Endothelial cell of umbilical vein (primary cell): ENCODE measurements at regions of chr16 and their contacts with region 1.

Region 1: GRCh38 chr16:57300387-57301125 is 16.1 kb upstream of the PLLP start:
- DNase-seq: peak; percentile 100
- H3K4me3 ChIP-seq: peak overlapping the region in 2 of 3 experiments; percentile 31 to 47
- H3K27ac ChIP-seq: peak overlapping the region; percentile 35
- H3K4me1 ChIP-seq: peaks cover 17% of the 10 kb centered on the region
- H3K27me3 ChIP-seq: no peaks in the 10 kb centered on the region
- CTCF ChIP-seq: peak; percentile 97 to 99
- POLR2A ChIP-seq: peak; percentile 32

Region 2: GRCh38 chr16:57091975-57092785 is 208.4 kb before region 1 on chr16 and contains the start of gene CPNE2:
- CTCF ChIA-PET with region 1: interaction called, 19 read pairs
- POLR2A ChIA-PET with region 1: no interaction called
- dilution Hi-C with region 1: no loop called
- intact Hi-C with region 1: no loop called
- DNase-seq: peak; percentile 65
- H3K4me3 ChIP-seq: peak within 1 kb of the TSS; percentile 64 to 86 (median 74)
- H3K27ac ChIP-seq: peak within 1 kb of the TSS; percentile 58
- H3K4me1 ChIP-seq: peaks cover 21% of the 10 kb centered on the region
- H3K27me3 ChIP-seq: no peaks in the 10 kb centered on the region
- CTCF ChIP-seq: no peak
- POLR2A ChIP-seq: peak; percentile 45
- total RNA-seq, gene CPNE2: 91.9 and 92.0 TPM in 2 replicates

Region 3: DNA sequence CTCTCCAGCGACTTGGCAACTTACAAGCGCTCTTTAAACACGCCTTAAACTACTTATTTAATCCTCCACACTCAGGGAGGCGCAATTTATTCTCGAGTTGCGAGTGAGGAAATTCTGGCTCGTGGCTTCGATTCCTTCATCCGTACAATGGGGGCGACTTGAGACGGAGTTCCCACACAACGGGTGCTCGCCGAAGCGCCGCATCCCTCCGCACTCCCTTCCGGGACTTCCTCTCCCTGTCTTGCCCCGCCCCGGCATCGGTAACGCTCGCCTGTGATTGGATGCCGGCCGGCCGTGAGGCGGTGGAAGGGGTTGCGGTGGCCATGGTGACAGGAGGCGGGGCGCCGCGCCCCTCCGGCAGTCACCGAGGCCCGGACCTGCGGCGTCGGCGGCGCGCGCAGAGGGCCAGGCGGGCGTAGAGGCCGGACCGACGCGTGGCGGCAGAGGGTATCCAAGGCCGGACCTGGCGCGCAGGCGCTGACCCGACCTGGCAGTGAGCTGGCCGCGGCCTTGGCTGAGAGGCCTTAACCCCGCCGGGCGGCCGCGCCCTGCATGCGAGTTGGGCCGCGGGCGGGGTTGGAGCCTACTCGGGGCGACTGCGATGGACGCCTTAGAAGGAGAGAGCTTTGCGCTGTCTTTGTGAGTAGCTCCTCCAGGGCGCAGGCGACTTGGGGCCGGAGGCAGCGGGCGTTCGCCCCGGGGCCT is 55.6 kb before region 1 on chr16 and contains the start of gene ARL2BP:
- CTCF ChIA-PET with region 1: interaction called, 19 read pairs
- POLR2A ChIA-PET with region 1: interaction called, 4 read pairs
- dilution Hi-C with region 1: no loop called
- intact Hi-C with region 1: loop called (anchors 1 kb)
- DNase-seq: peak; percentile 99
- H3K4me3 ChIP-seq: peak within 1 kb of the TSS; percentile 75 to 89 (median 85)
- H3K27ac ChIP-seq: peak within 1 kb of the TSS; percentile 72
- H3K4me1 ChIP-seq: peaks cover 11% of the 10 kb centered on the region
- H3K27me3 ChIP-seq: no peaks in the 10 kb centered on the region
- CTCF ChIP-seq: peak; percentile 3 to 10
- POLR2A ChIP-seq: peak; percentile 89
- total RNA-seq, gene ARL2BP: 76.7 and 80.4 TPM in 2 replicates

Region 4: DNA sequence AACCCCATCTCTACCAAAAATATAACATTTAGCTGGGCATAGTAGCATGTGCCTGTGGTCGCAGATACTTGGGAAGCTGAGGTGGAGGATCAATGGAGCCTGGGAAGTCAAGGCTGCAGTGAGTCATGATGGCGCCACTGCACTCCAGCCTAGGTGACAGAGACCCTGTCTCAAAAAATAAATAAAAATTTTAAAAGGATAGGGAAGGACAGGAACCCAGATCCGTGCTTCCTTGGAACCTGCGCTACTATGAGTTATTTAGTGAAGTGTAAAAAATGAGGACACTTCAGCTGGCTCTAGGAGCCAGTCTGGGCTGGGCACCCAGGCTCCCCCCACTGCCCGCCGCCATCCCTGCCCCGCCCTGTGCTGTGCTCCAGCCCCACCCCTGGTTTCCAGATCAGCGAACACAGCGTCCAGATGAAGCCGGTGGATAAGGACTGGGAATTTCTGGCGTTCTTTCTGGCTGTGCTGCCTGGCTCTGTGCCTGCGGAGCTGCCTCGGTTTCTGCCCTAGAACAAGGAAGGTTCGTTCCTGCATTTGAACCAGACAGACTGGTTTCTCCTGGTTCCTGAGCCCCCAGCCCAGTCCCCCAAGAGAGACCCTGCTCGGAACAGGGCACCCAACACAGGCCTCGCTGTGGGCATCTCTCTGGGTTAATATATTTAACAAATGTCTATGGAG is 34.6 kb before region 1 on chr16:
- CTCF ChIA-PET with region 1: interaction called, 8 read pairs
- POLR2A ChIA-PET with region 1: no interaction called
- dilution Hi-C with region 1: no loop called
- intact Hi-C with region 1: loop called (anchors 1 kb)
- DNase-seq: peak; percentile 83
- H3K4me3 ChIP-seq: peak overlapping the region in 1 of 3 experiments; percentile 41
- H3K27ac ChIP-seq: peak overlapping the region; percentile 77
- H3K4me1 ChIP-seq: peaks cover 21% of the 10 kb centered on the region
- H3K27me3 ChIP-seq: no peaks in the 10 kb centered on the region
- CTCF ChIP-seq: no peak
- POLR2A ChIP-seq: peak; percentile 49

Region 5: GRCh38 chr16:57349212-57350031 is 48.9 kb after region 1 on chr16:
- CTCF ChIA-PET with region 1: no interaction called
- POLR2A ChIA-PET with region 1: no interaction called
- dilution Hi-C with region 1: no loop called
- intact Hi-C with region 1: no loop called
- DNase-seq: no peak
- H3K4me3 ChIP-seq: no peak overlapping the region
- H3K27ac ChIP-seq: no peak overlapping the region
- H3K4me1 ChIP-seq: no peaks in the 10 kb centered on the region
- H3K27me3 ChIP-seq: peaks cover 10 to 20% of the 10 kb centered on the region in 2 experiments
- CTCF ChIP-seq: no peak
- POLR2A ChIP-seq: no peak

Region 6: DNA sequence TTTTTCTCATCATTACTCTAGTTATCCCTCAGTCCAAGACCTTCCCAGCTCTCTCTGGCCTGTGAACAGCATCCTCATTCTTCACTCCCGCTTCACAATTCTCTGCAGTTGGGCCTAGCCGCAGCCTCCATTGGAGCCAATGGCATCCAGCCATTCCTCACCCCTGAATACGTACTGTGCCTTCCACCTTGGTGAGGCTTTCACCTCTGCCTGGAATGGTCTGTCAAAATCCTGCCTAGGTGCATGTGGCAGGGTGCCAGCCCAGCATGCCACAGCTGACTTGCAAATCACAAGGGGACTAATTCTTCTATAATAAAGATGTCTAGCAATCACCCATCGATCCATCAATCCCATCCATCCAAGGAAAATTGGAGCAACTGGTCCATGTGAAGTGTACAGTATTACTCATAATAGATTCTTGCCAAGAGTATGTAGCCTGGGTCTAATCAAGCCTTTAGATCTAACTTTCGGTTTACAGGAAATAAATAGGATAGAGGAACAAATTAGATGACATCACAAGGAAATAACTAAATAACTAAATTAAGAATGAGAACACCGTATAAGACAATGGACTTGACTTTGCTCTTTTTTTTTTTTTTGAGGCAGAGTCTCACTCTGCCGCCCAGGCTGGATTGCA is 66.7 kb after region 1 on chr16:
- CTCF ChIA-PET with region 1: interaction called, 5 read pairs
- POLR2A ChIA-PET with region 1: no interaction called
- dilution Hi-C with region 1: no loop called
- intact Hi-C with region 1: loop called (anchors 1 kb)
- DNase-seq: peak; percentile 58
- H3K4me3 ChIP-seq: no peak overlapping the region
- H3K27ac ChIP-seq: no peak overlapping the region
- H3K4me1 ChIP-seq: peaks cover 19% of the 10 kb centered on the region
- H3K27me3 ChIP-seq: no peaks in the 10 kb centered on the region
- CTCF ChIP-seq: no peak
- POLR2A ChIP-seq: no peak

Region 7: GRCh38 chr16:57422026-57422944 is 121.7 kb after region 1 on chr16:
- CTCF ChIA-PET with region 1: interaction called, 507 read pairs
- POLR2A ChIA-PET with region 1: interaction called, 4 read pairs
- dilution Hi-C with region 1: loop called (anchors 25 kb)
- intact Hi-C with region 1: loop called (anchors 1 kb)
- DNase-seq: peak; percentile 67
- H3K4me3 ChIP-seq: no peak overlapping the region
- H3K27ac ChIP-seq: no peak overlapping the region
- H3K4me1 ChIP-seq: peaks cover 5% of the 10 kb centered on the region
- H3K27me3 ChIP-seq: no peaks in the 10 kb centered on the region
- CTCF ChIP-seq: peak; percentile 68 to 72
- POLR2A ChIP-seq: no peak

Region 8: GRCh38 chr16:57519796-57520360 is 219.3 kb after region 1 on chr16:
- CTCF ChIA-PET with region 1: interaction called, 17 read pairs
- POLR2A ChIA-PET with region 1: no interaction called
- dilution Hi-C with region 1: no loop called
- intact Hi-C with region 1: loop called (anchors 1 kb)
- DNase-seq: peak; percentile 59
- H3K4me3 ChIP-seq: no peak overlapping the region
- H3K27ac ChIP-seq: no peak overlapping the region
- H3K4me1 ChIP-seq: peaks cover 3% of the 10 kb centered on the region
- H3K27me3 ChIP-seq: no peaks in the 10 kb centered on the region
- CTCF ChIP-seq: peak; percentile 97 to 98
- POLR2A ChIP-seq: no peak